ENCODE measurements at regions of chr2 and their contacts with region 1.

Region 1: DNA sequence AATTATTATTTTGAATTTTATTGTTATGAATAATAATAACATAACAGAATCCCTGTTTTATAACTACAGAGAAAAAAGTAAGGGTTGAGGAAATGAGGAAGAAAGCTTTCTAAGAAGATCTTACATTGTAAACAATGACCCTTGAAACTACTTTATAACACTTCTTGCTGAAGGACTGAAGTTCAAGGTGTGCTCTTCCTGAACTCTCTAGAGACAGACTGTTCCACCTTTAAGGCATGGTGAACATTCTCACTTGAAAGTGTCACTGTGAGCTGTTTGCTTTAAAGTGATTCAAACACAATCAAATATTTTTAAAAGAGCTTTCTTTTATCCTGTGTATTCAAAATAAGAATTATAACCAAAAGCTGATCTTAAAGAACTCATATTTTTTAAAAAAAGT is 131.5 kb downstream of the DNAH7 start:
- DNase-seq: no peak
- ATAC-seq: no peak
- H3K4me3 ChIP-seq: no peak overlapping the region
- H3K27ac ChIP-seq: no peak overlapping the region
- H3K4me1 ChIP-seq: no peaks in the 10 kb centered on the region
- H3K27me3 ChIP-seq: no peaks in the 10 kb centered on the region
- CTCF ChIP-seq: no peak

Region 2: GRCh38 chr2:195498176-195498575 is 439.0 kb before region 1 on chr2:
- CTCF ChIA-PET with region 1: no interaction called
- POLR2A ChIA-PET with region 1: no interaction called
- intact Hi-C with region 1: loop called (anchors 5 kb)
- DNase-seq: peak; percentile 59
- ATAC-seq: peak; percentile 37; the same call in 1 of the 2 replicates
- H3K4me3 ChIP-seq: no peak overlapping the region
- H3K27ac ChIP-seq: no peak overlapping the region
- H3K4me1 ChIP-seq: 0 out of 2 replicates have a peak, but pooled peaks cover 7% of the 10 kb centered on the region
- H3K27me3 ChIP-seq: no peaks in the 10 kb centered on the region
- CTCF ChIP-seq: peak; percentile 72

Region 3: GRCh38 chr2:195664528-195664927 is 272.6 kb before region 1 on chr2:
- CTCF ChIA-PET with region 1: interaction called, 5 read pairs
- POLR2A ChIA-PET with region 1: no interaction called
- intact Hi-C with region 1: loop called (anchors 1 kb)
- DNase-seq: peak; percentile 48
- ATAC-seq: peak; percentile 45; the same call in 1 of the 2 replicates
- H3K4me3 ChIP-seq: no peak overlapping the region
- H3K27ac ChIP-seq: no peak overlapping the region
- H3K4me1 ChIP-seq: peaks cover 6% of the 10 kb centered on the region
- H3K27me3 ChIP-seq: no peaks in the 10 kb centered on the region
- CTCF ChIP-seq: peak; percentile 44

Region 4: DNA sequence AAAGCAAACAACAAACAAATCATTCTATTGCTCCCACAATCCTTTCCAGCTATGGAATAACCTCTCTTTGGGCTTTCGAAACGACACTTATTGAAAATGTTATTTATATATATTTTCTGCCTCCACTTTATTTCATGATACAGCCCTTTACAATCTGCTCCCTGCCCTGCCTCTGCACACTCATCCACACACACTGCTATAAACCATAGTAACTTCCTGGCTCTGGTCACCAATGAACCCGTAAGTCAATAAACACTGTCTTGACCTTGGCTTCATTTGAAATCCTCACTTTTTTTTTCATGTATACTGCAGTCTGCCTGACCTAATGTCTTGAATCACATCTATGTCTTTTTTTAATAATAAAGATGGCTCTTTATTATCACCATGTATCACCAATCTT is 118.7 kb before region 1 on chr2:
- CTCF ChIA-PET with region 1: no interaction called
- POLR2A ChIA-PET with region 1: no interaction called
- intact Hi-C with region 1: loop called (anchors 2 kb)
- DNase-seq: peak; percentile 72
- ATAC-seq: peak; percentile 90
- H3K4me3 ChIP-seq: no peak overlapping the region; the same call in 1 of the 2 replicates
- H3K27ac ChIP-seq: peak overlapping the region; percentile 71
- H3K4me1 ChIP-seq: peaks cover 39% of the 10 kb centered on the region
- H3K27me3 ChIP-seq: no peaks in the 10 kb centered on the region
- CTCF ChIP-seq: no peak

Region 5: GRCh38 chr2:196018037-196018436 is 80.9 kb after region 1 on chr2:
- CTCF ChIA-PET with region 1: no interaction called
- POLR2A ChIA-PET with region 1: no interaction called
- intact Hi-C with region 1: no loop called
- DNase-seq: no peak
- ATAC-seq: no peak
- H3K4me3 ChIP-seq: no peak overlapping the region
- H3K27ac ChIP-seq: no peak overlapping the region
- H3K4me1 ChIP-seq: no peaks in the 10 kb centered on the region
- H3K27me3 ChIP-seq: no peaks in the 10 kb centered on the region
- CTCF ChIP-seq: no peak

Region 6: DNA sequence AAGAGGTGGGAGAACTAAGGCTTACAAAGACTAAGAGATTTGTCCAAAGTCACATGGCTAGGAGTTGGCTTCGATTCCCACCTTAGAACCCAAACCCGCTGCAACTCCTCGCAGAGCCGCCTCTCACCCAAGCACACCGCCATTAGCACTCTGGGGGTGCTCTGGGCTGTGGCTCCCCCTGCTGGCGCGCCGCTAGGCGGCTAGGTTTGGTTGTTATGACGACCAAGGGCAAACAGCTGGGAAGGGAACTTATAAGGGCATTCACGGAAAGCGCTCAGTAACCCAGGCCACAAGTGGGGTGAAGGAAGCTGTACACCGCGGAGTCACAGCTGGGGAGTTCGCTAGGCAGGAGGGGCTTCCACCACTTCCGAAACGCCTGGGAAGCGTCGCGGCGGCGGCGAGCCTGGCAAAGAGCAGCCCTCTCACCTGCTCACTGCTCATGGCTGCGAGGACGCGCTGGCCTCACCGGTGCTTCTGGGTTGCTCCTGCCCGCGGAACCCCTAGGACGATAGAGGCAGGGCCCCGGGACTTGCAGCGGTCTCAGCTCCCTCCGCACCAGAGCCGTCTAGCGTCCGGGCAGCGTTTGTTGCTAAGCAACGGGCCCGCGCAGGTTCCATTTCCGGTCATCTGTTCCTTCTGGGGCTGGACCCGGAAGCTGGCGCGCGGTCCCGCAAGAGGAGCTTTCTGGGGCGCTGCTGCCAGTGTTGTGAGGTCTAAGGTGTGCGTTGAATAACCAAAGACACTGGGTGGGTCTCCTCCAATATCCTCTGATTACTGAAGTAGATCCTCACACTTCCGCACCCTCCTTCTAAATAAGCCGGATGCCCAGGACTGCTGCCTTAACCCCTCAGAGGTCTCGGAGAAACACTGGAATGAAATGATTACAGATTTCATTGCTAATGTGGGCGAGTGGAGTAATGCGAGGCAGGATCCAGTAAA is 131.4 kb after region 1 on chr2 and contains the start of gene DNAH7:
- CTCF ChIA-PET with region 1: no interaction called
- POLR2A ChIA-PET with region 1: no interaction called
- intact Hi-C with region 1: loop called (anchors 2 kb)
- DNase-seq: peak; percentile 77
- ATAC-seq: peak; percentile 93
- H3K4me3 ChIP-seq: peak within 1 kb of the TSS; percentile 83
- H3K27ac ChIP-seq: no peak within 1 kb of the TSS
- H3K4me1 ChIP-seq: peaks cover 15% of the 10 kb centered on the region
- H3K27me3 ChIP-seq: no peaks in the 10 kb centered on the region
- CTCF ChIP-seq: peak; percentile 67
- total RNA-seq, gene DNAH7: 1.9 and 3.1 TPM in 2 replicates

Measured in PC-3 (cell line).